CD8-positive, alpha-beta memory T cell (primary cell): ENCODE measurements at regions of chr16 and their contacts with region 1.

Region 1: GRCh38 chr16:1782352-1783091 is at the starts of genes NUBP2 and SPSB3:
- DNase-seq: peak; percentile 98 to 99 (median 98)
- H3K4me3 ChIP-seq: peak within 1 kb of the TSS; percentile 82
- H3K4me3 Mint-ChIP-seq: peak within 1 kb of the TSS; percentile 89 to 96 (median 92)
- H3K27ac ChIP-seq: peak within 1 kb of the TSS; percentile 86
- H3K27ac Mint-ChIP-seq: peak within 1 kb of the TSS; percentile 87 to 97 (median 92)
- H3K4me1 ChIP-seq: peaks cover 35% of the 10 kb centered on the region
- H3K4me1 Mint-ChIP-seq: peaks cover 18 to 53% (median 26%) of the 10 kb centered on the region in 3 donors
- H3K27me3 ChIP-seq: no peaks in the 10 kb centered on the region
- H3K27me3 Mint-ChIP-seq: peaks cover 0 to 2% of the 10 kb centered on the region in 2 donors
- total RNA-seq, gene NUBP2: 73.9 to 82.8 TPM
- total RNA-seq, gene SPSB3: 30.6 to 31.5 TPM

Region 2: GRCh38 chr16:1826691-1827575 is 44.4 kb after region 1 on chr16 and contains the starts of genes FAHD1 and HAGH:
- CTCF ChIA-PET with region 1: interaction called, 3 read pairs
- POLR2A ChIA-PET with region 1: interaction called, 12 read pairs
- DNase-seq: peak; percentile 83 to 96 (median 90)
- H3K4me3 ChIP-seq: peak within 1 kb of the TSS; percentile 95
- H3K4me3 Mint-ChIP-seq: peak within 1 kb of the TSS; percentile 92 to 97 (median 94)
- H3K27ac ChIP-seq: peak within 1 kb of the TSS; percentile 73
- H3K27ac Mint-ChIP-seq: peak within 1 kb of the TSS; percentile 90 to 95 (median 93)
- H3K4me1 ChIP-seq: peaks cover 39% of the 10 kb centered on the region
- H3K4me1 Mint-ChIP-seq: peaks cover 32 to 65% (median 51%) of the 10 kb centered on the region in 3 donors
- H3K27me3 ChIP-seq: no peaks in the 10 kb centered on the region
- H3K27me3 Mint-ChIP-seq: no peaks in the 10 kb centered on the region
- total RNA-seq, gene FAHD1: 19.3 to 20.9 TPM
- total RNA-seq, gene HAGH: 41.2 to 44.5 TPM